ENCODE measurements at regions of chr22 and their contacts with region 1.

Region 1: DNA sequence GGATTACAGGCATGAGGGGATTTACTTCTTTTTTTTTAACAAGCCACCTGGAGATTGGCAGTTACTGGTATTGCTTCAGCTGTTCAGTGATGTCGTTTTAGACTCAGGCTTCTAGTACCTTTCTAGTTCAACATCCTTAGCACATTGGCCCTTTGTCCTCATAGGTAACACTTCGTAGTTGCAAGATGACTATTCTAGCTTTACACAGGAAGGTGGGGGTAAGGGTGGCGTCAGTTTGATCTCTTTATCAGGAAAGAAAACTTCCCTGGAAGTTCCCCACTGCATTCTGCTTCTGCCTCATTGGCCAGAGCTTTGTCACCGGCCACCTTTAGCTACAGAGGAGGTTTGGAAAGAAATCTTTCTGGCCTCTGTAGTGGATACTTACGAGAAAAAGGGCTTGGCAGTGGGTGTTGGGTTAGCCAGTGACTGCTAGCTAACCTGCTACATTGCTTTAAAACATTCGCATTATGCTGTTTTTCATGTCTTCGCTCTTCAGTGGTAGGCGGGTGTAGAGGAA is 40.7 kb downstream of the SFI1 start:
- DNase-seq: peak; percentile 84
- H3K4me3 Mint-ChIP-seq: peak overlapping the region; percentile 76
- H3K27ac Mint-ChIP-seq: peak overlapping the region; percentile 99
- H3K4me1 Mint-ChIP-seq: peaks cover 54% of the 10 kb centered on the region
- H3K27me3 Mint-ChIP-seq: no peaks in the 10 kb centered on the region

Region 2: GRCh38 chr22:31526270-31526669 is 10.8 kb before region 1 on chr22:
- intact Hi-C with region 1: loop called (anchors 1 kb)
- DNase-seq: peak; percentile 73
- H3K4me3 Mint-ChIP-seq: peak overlapping the region; percentile 64
- H3K27ac Mint-ChIP-seq: peak overlapping the region; percentile 96
- H3K4me1 Mint-ChIP-seq: peaks cover 47% of the 10 kb centered on the region
- H3K27me3 Mint-ChIP-seq: no peaks in the 10 kb centered on the region

Region 3: DNA sequence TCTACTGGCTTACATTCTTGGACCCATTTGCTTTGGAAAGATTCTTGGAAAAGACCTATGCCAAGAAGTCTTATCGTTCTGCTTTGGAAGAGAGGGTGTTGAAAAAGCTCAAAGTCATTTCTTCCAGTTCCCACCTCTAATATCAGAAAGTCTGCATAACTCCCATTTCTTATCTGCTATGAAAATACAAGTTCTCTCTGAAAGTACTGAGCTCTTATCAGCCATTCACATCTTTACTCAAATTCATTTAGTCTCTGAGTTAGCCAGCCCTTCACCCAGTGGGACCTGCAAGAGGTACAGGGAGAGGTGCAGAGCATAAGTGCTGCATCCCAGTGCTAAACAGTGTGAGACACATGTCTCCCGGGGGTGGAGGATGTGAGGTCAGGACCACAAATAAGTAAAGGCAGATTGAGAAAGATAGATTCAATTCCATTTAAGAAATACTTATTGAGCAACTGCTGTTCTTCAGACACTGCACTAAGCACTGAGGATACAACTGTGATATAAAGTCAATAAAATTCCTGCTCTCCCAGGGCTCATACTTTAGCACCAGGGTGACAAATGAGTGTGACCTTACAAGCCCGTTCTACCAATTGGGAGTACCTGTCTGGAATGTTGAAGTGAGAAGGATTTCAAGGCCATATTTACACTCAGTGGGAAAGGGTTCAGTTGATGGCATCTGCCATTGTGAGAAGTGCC is 48.2 kb after region 1 on chr22:
- intact Hi-C with region 1: loop called (anchors 5 kb)
- DNase-seq: peak; percentile 67
- H3K4me3 Mint-ChIP-seq: peak overlapping the region; percentile 35
- H3K27ac Mint-ChIP-seq: peak overlapping the region; percentile 88
- H3K4me1 Mint-ChIP-seq: peaks cover 44% of the 10 kb centered on the region
- H3K27me3 Mint-ChIP-seq: no peaks in the 10 kb centered on the region

Region 4: DNA sequence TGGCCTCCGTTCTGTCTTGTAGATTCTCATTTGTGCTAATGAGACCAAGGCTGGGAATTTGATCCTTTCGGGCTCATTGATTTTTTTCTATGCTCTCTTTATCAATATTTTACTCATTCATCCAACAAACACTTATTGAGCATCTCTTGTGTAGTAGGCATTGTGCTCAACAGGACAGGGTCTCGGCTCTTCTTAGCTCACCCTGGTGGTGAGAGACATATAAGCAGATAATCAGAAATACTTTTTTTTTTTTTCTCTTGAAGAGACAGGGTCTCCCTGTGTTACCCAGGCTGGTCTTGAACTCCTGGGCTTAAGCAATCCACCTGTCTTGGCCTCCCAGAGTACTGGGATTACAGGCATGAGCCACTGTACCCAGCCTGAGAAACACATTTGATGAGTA is 458.0 kb after region 1 on chr22:
- intact Hi-C with region 1: no loop called
- DNase-seq: no peak
- H3K4me3 Mint-ChIP-seq: no peak overlapping the region
- H3K27ac Mint-ChIP-seq: no peak overlapping the region
- H3K4me1 Mint-ChIP-seq: no peaks in the 10 kb centered on the region
- H3K27me3 Mint-ChIP-seq: peaks cover 26% of the 10 kb centered on the region